ENCODE measurements at regions of chr2 and their contacts with region 1.

Region 1: GRCh38 chr2:150601280-150602038 is 114.0 kb upstream of the RND3 start:
- DNase-seq: no peak
- ATAC-seq: no peak; the same call in 2 of the 3 replicates
- H3K4me3 ChIP-seq: no peak overlapping the region
- H3K27ac ChIP-seq: no peak overlapping the region
- H3K4me1 ChIP-seq: no peaks in the 10 kb centered on the region
- H3K27me3 ChIP-seq: no peaks in the 10 kb centered on the region
- CTCF ChIP-seq: no peak
- EP300 ChIP-seq: no peak
- POLR2A ChIP-seq: no peak
- RAD21 ChIP-seq: no peak

Region 2: GRCh38 chr2:150478200-150478974 is 123.1 kb before region 1 on chr2:
- CTCF ChIA-PET with region 1: interaction called, 5 read pairs
- POLR2A ChIA-PET with region 1: no interaction called
- RAD21 ChIA-PET with region 1: interaction called, 9 read pairs
- SMC1A ChIA-PET with region 1: interaction called, 15 read pairs
- in situ Hi-C with region 1: no loop called
- intact Hi-C with region 1: no loop called
- DNase-seq: no peak
- ATAC-seq: peak; percentile 16
- H3K4me3 ChIP-seq: no peak overlapping the region
- H3K27ac ChIP-seq: no peak overlapping the region
- H3K4me1 ChIP-seq: no peaks in the 10 kb centered on the region
- H3K27me3 ChIP-seq: no peaks in the 10 kb centered on the region; a peak in 1 of 4 replicates
- CTCF ChIP-seq: no peak
- EP300 ChIP-seq: no peak
- POLR2A ChIP-seq: no peak
- RAD21 ChIP-seq: no peak

Region 3: DNA sequence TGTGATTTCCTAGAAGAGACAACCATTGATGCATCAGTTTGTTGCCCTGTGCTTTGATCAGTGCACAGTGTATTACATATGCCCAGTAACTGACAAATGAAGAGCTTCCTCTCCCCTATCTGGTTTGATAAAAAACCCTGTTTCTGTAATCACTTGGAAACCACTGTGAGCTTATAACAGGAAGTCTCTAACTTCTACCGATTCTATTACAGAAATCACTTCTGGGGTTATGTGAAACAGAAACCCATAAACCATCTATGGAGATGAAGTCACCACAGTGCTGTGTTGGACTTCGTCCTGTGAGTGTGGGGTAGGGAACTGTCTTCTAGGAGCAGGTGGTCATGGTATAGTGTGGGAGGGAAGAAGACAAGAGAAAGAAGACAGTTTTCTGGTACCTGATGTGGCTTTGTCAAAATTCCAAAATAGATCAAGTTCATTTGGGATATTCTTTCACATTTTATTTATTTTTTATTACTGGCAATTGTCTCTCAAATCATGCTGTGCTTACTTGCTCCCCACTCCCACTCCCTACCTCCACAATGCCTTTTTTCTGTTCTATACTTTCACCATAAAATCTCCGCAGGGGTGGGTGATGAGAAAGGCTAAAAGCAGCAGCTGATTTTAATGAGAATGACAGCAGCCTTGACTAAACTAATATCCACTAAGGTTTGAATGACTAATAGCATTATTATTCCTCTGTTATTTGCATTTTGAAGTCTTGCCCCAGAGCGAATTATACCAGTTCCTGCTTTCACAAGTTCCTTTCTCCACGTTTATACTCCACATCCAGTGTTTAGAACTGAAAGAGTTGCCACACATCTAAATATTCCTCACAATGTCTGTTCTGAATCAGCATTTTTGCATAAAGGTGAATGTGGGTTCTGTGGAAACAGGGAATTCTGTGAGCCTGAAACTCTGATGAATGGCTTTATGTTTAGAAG is 72.3 kb before region 1 on chr2:
- CTCF ChIA-PET with region 1: interaction called, 29 read pairs
- POLR2A ChIA-PET with region 1: interaction called, 4 read pairs
- RAD21 ChIA-PET with region 1: interaction called, 40 read pairs
- SMC1A ChIA-PET with region 1: interaction called, 49 read pairs
- in situ Hi-C with region 1: no loop called
- intact Hi-C with region 1: no loop called
- DNase-seq: peak; percentile 45
- ATAC-seq: peak; percentile 96
- H3K4me3 ChIP-seq: no peak overlapping the region
- H3K27ac ChIP-seq: no peak overlapping the region
- H3K4me1 ChIP-seq: no peaks in the 10 kb centered on the region; the same call in 1 of the 2 replicates
- H3K27me3 ChIP-seq: no peaks in the 10 kb centered on the region
- CTCF ChIP-seq: no peak
- EP300 ChIP-seq: no peak; a peak in 1 of 4 replicates
- POLR2A ChIP-seq: no peak
- RAD21 ChIP-seq: no peak

Region 4: GRCh38 chr2:150555611-150556356 is 45.7 kb before region 1 on chr2:
- CTCF ChIA-PET with region 1: interaction called, 10 read pairs
- POLR2A ChIA-PET with region 1: interaction called, 3 read pairs
- RAD21 ChIA-PET with region 1: interaction called, 10 read pairs
- SMC1A ChIA-PET with region 1: interaction called, 8 read pairs
- in situ Hi-C with region 1: no loop called
- intact Hi-C with region 1: no loop called
- DNase-seq: no peak
- ATAC-seq: peak; percentile 63
- H3K4me3 ChIP-seq: no peak overlapping the region
- H3K27ac ChIP-seq: no peak overlapping the region
- H3K4me1 ChIP-seq: no peaks in the 10 kb centered on the region
- H3K27me3 ChIP-seq: no peaks in the 10 kb centered on the region
- CTCF ChIP-seq: no peak
- EP300 ChIP-seq: no peak
- POLR2A ChIP-seq: no peak
- RAD21 ChIP-seq: no peak

Region 5: DNA sequence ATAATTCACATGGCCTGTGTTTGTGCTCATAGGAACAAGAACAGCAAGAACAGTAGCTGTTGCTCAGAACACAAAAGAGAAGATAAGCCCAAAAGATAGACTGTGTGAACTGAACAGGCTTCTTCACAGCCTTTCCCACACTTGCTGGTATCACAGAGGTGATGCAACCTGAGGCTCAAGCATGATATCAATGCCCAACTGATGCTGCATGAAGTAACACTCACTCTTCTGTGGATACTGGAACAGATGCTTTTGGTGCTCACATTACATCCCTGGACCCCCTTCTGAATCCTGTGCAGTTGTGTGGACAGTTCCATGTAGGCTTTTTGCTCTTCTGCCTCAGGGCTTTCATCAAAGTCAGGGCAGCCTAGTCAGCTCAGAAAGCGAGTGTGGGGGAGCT is 25.6 kb before region 1 on chr2:
- CTCF ChIA-PET with region 1: interaction called, 14 read pairs
- POLR2A ChIA-PET with region 1: no interaction called
- RAD21 ChIA-PET with region 1: interaction called, 22 read pairs
- SMC1A ChIA-PET with region 1: interaction called, 27 read pairs
- in situ Hi-C with region 1: no loop called
- intact Hi-C with region 1: no loop called
- DNase-seq: no peak
- ATAC-seq: no peak
- H3K4me3 ChIP-seq: no peak overlapping the region
- H3K27ac ChIP-seq: no peak overlapping the region
- H3K4me1 ChIP-seq: peaks cover 3% of the 10 kb centered on the region; the same call in 1 of the 2 replicates
- H3K27me3 ChIP-seq: no peaks in the 10 kb centered on the region
- CTCF ChIP-seq: no peak
- EP300 ChIP-seq: no peak
- POLR2A ChIP-seq: no peak
- RAD21 ChIP-seq: no peak

Region 6: DNA sequence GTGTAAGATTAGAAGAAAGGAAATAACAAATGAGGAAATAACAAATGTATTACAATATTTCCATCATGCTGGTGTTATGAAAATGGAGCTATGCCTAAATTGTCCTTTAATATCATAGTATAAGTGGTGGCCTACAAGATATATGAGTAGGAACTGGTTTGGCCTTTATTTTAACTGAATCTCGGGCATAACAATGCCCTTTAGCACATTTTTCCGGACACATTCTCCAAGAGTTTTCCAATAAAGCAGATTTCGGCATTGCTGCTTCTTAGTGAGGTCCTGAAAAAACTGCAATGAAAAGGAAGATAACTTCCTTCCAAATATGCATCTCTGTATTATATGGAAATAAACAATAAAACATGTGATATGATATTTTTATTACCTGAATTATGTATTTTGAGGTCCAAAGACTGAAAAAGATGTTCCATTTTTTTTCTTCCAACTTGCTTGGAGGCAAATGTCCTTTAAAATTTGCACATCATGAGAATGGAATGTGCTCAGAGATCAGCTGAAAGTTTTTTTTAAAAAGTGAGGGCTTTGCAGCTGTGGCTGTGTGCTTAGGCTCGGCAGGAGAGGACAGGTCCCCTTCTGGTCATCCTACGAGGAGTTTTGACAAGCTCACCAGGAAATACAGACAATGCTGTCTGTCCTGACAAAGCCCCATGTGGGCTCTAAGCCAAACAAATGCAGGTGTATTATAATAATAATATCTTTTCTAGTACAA is 18.3 kb after region 1 on chr2:
- CTCF ChIA-PET with region 1: interaction called, 15 read pairs
- POLR2A ChIA-PET with region 1: interaction called, 3 read pairs
- RAD21 ChIA-PET with region 1: interaction called, 20 read pairs
- SMC1A ChIA-PET with region 1: interaction called, 13 read pairs
- in situ Hi-C with region 1: no loop called
- intact Hi-C with region 1: no loop called
- DNase-seq: no peak
- ATAC-seq: no peak
- H3K4me3 ChIP-seq: no peak overlapping the region
- H3K27ac ChIP-seq: no peak overlapping the region
- H3K4me1 ChIP-seq: no peaks in the 10 kb centered on the region
- H3K27me3 ChIP-seq: no peaks in the 10 kb centered on the region; a peak in 1 of 4 replicates
- CTCF ChIP-seq: no peak
- EP300 ChIP-seq: no peak
- POLR2A ChIP-seq: no peak
- RAD21 ChIP-seq: no peak

Measured in GM12878 (cell line).